Posterior vena cava (tissue), 2 donors: ENCODE measurements at regions of chr17 and their contacts with region 1.

Region 1: DNA sequence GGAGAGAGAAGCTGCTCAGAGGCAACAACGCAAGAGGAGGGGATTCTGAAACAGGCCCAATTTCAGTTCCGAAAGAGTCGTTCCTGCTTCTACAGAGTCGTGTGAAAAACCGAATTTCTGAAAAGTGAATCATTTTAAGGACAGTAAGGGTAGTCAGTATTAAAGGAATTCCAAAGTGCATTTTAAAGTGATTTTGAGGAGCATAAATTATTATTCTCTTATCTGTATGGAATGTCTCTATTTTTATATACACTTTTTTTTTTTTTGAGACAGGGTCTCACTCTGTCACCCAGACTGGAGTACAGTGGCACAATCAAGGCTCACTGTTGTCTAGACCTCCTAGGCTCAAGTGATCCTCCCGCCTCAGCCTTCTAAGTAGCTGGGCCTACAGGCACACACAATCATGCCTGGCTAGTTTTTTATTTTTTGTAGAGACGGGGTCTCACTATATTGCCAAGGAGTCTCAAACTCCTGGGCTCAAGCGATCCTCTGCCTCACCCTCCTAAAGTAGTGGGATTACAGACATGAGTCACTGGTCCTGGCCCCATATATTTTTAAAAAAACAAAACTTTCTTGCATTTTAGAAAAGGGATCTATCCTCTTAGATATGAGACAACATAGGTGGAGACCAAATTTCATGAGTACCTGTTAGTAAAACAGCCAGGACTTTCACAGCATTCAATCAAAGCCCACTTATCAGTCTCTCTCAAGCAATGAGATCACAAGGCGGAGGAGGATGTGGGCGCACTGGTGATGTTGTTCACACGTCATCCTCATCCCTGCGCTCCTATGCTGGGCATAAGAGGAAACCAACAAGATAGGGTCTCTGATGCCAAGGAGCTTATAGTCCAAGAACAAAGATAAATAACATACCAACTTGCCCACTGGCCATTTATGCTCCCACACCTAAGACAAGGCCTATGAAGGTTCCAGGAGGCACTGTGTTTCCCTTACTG is 53.2 kb downstream of the SMG6 start:
- DNase-seq: no peak

Region 2: DNA sequence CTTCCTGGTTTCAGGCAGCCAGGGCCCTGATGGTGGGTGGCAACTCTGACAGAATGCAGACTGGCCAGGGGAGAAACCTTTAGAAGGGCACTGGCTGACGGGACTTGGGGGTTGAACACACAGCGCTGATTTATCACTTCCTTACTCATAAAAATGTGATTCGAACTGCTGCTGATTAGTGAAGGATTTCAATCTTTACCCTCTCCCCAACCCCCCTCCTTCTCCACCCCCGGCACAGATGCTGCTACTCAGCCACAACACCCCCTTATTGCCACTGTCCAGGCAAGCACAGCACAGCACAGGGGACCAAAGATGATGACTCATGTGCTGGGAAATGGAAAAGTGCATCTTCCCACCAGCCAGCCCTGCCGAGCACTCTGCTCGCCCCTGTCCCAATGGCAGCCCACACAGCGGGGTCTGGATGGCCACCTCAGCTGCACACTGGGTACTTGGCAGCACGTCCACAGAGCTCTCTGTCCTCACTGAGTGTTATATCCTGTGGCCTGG is 16.9 kb before region 1 on chr17:
- intact Hi-C with region 1: loop called in 1 of 2 experiments (anchors 2 kb)
- DNase-seq: peak; percentile 82

Region 3: DNA sequence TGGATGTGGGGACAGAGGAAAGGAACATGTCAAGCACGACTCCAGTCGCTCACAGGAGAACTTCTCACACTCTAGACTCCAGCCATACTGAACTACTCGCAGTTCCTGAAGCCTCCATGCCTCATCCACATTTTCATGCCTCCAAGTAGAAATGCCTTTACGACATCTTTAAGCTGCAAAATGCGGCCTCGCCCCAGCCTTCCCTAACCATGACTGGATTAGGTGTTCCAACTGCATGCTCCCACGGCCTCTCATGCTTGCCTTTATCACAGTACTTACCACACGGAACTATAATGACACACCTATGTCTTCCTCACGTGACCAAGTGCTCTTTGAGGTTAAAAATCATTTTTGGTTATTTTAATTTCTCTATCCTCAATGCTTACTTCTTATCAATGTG is 29.3 kb after region 1 on chr17:
- intact Hi-C with region 1: loop called in 1 of 2 experiments (anchors 2 kb)
- DNase-seq: no peak